CD8-positive, alpha-beta memory T cell (primary cell): ENCODE measurements at regions of chr22 and their contacts with region 1.

Region 1: GRCh38 chr22:50544078-50544745 is 1.5 kb upstream of the KLHDC7B start:
- DNase-seq: peak; percentile 72 to 87 (median 78)
- H3K4me3 ChIP-seq: peak overlapping the region; percentile 77
- H3K4me3 Mint-ChIP-seq: peak overlapping the region; percentile 60 to 85 (median 71)
- H3K27ac ChIP-seq: peak overlapping the region; percentile 33
- H3K27ac Mint-ChIP-seq: peak overlapping the region; percentile 74 to 99 (median 91)
- H3K4me1 ChIP-seq: peaks cover 41% of the 10 kb centered on the region
- H3K4me1 Mint-ChIP-seq: peaks cover 39 to 55% (median 44%) of the 10 kb centered on the region in 3 donors
- H3K27me3 ChIP-seq: no peaks in the 10 kb centered on the region
- H3K27me3 Mint-ChIP-seq: no peaks in the 10 kb centered on the region

Region 2: DNA sequence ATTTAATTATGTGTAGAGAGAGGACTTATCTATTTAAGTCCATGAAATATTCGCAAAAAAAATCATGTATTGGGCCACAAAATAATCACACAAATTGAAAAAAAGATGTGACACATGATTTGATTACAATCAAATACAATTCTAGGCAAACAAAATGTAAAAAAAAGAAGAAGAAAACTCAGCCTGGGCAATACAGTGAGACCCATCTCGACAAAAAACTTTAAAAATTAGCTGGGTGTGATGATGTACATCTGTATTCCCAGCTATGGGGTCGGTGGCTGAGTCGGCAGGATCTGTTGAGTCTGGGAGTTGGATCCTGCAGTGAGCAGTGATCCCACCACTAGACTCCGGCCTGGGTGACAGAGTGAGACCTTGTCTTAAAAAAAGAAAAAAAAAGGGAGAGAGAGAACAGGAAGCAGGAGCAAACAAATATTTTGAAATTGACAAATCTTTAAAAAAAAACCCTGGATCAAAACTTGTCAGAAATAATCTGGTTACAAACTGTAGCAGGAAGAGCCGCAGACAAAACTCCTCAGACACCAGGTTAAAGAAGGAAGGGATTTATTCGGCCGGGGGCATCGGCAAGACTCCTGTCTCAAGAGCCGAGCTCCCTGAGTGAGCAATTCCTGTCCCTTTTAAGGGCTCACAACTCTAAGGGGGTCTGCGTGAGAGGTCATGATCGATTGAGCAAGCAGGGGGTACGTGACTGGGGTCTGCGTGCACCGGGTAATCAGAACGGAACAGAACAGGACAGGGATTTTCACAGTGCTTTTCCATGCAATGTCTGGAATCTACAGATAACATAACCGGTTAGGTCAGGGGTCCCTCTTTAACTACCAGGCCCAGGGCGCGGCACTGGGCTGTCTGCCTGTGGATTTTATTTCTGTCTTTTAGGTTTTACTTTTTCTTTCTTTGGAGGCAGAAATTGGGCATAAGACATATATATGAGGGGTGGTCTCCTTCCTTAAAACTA is 11.1 kb before region 1 on chr22:
- CTCF ChIA-PET with region 1: interaction called, 86 read pairs
- POLR2A ChIA-PET with region 1: interaction called, 81 read pairs
- DNase-seq: peak in 1 of 5 donors; percentile 29
- H3K4me3 ChIP-seq: no peak overlapping the region
- H3K4me3 Mint-ChIP-seq: peak overlapping the region in 6 of 7 donors; percentile 34 to 77 (median 68)
- H3K27ac ChIP-seq: peak overlapping the region; percentile 16
- H3K27ac Mint-ChIP-seq: peak overlapping the region; percentile 75 to 99 (median 88)
- H3K4me1 ChIP-seq: peaks cover 13% of the 10 kb centered on the region
- H3K4me1 Mint-ChIP-seq: peaks cover 13 to 23% (median 19%) of the 10 kb centered on the region in 3 donors
- H3K27me3 ChIP-seq: no peaks in the 10 kb centered on the region
- H3K27me3 Mint-ChIP-seq: peaks cover 0 to 2% of the 10 kb centered on the region in 2 donors

Region 3: GRCh38 chr22:50571666-50572065 is 27.5 kb after region 1 on chr22:
- CTCF ChIA-PET with region 1: no interaction called
- POLR2A ChIA-PET with region 1: no interaction called
- DNase-seq: no peak
- H3K4me3 ChIP-seq: no peak overlapping the region
- H3K4me3 Mint-ChIP-seq: no peak overlapping the region
- H3K27ac ChIP-seq: no peak overlapping the region
- H3K27ac Mint-ChIP-seq: peak overlapping the region in 1 of 8 donors; percentile 65
- H3K4me1 ChIP-seq: no peaks in the 10 kb centered on the region
- H3K4me1 Mint-ChIP-seq: peaks cover 0 to 3% (median 0%) of the 10 kb centered on the region in 3 donors
- H3K27me3 ChIP-seq: no peaks in the 10 kb centered on the region
- H3K27me3 Mint-ChIP-seq: no peaks in the 10 kb centered on the region

Region 4: DNA sequence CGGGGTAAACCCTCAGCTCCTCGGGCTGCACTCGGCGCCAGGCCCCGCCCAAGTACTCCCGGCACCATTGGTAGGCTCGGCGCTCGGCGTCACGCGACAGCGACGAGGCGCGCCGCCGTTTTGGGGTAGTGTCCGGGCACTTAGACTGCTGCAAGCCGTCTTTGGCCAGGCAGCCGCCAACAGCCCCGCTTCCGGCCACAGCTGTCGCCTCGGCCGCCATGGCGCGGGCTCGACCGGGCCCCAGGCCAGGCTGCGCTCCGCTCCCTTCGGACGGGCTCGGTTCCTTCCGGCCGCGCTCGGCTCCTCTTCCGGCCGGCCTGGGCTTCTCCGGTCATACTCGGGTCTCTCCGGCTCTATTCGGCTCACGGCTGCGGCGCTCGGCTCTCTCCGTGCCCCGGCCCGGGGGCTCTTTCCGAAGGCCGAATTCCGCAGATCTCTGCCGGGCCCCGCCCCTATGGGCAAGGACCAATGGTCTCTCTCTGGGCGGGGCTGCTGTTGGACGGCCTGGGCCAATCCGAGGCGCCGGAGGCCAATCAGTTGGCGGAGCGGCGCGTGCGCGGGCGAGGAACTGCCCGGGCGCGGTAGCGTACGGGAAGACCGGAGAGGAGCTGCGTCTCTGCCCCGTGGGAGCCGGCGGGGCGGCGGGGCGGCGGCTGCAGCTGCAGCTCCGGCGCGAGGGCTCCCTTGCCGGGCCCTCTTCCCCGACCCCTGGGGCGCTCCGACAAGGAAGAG is 38.5 kb after region 1 on chr22 and contains the start of gene CHKB:
- CTCF ChIA-PET with region 1: interaction called, 3 read pairs
- POLR2A ChIA-PET with region 1: interaction called, 14 read pairs
- DNase-seq: peak; percentile 97 to 99 (median 98)
- H3K4me3 ChIP-seq: peak within 1 kb of the TSS; percentile 89
- H3K4me3 Mint-ChIP-seq: peak within 1 kb of the TSS; percentile 88 to 98 (median 94)
- H3K27ac ChIP-seq: peak within 1 kb of the TSS; percentile 94
- H3K27ac Mint-ChIP-seq: peak within 1 kb of the TSS; percentile 88 to 99 (median 96)
- H3K4me1 ChIP-seq: peaks cover 19% of the 10 kb centered on the region
- H3K4me1 Mint-ChIP-seq: peaks cover 11 to 32% (median 17%) of the 10 kb centered on the region in 3 donors
- H3K27me3 ChIP-seq: no peaks in the 10 kb centered on the region
- H3K27me3 Mint-ChIP-seq: no peaks in the 10 kb centered on the region
- total RNA-seq, gene CHKB: 72.1 to 76.1 TPM